Activated naive CD4-positive, alpha-beta T cell treated with anti-CD3 and anti-CD28 coated beads for 36 hours (primary cell): ENCODE measurements at regions of chr5 and their contacts with region 1.

Region 1: GRCh38 chr5:1594357-1595106 is 70.8 kb upstream of the LPCAT1 start:
- DNase-seq: peak; percentile 80
- H3K4me3 Mint-ChIP-seq: peak overlapping the region; percentile 74
- H3K27ac Mint-ChIP-seq: no peak overlapping the region
- H3K4me1 Mint-ChIP-seq: peaks cover 19% of the 10 kb centered on the region
- H3K27me3 Mint-ChIP-seq: no peaks in the 10 kb centered on the region

Region 2: GRCh38 chr5:1385395-1386273 is 208.9 kb before region 1 on chr5:
- CTCF ChIA-PET with region 1: no interaction called
- intact Hi-C with region 1: loop called (anchors 1 kb)
- DNase-seq: peak; percentile 85
- H3K4me3 Mint-ChIP-seq: peak overlapping the region; percentile 90
- H3K27ac Mint-ChIP-seq: peak overlapping the region; percentile 89
- H3K4me1 Mint-ChIP-seq: peaks cover 15% of the 10 kb centered on the region
- H3K27me3 Mint-ChIP-seq: no peaks in the 10 kb centered on the region

Region 3: DNA sequence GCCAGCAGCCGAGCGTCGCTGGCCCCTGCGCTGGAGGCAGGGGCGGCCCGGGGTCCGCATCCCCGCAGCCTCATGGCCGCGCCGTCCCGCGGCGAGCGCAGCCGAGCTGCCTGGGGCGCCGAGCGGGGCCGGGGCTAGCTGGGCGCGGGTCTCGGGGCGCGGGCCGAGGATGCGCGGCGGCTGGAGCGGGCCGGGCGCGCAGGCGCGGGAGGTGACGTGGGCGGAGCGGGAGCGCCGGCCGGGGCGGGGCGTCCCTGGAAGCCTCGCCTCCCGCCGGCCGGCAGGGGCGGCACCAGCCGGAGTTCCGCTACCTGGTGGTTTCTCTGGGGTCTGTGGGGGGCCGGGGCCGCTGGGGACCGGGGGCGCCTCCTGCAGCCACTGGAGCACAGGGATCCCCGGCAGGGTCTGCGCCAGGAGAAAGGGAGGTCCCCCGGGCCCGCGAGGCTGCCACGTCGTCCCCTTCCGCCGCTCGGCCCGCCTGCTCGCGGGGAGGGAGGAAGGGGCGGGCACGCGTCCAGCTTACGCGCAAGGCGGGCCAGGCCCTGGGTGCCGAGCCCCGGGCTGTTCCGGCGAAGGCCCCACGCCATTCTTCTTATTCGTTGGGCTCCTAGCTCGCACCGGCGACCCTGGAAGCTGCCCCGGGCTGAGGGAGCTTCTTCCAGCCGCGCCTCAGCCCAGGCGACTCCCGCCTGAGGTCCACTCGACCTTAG is 70.6 kb before region 1 on chr5 and contains the start of gene LPCAT1:
- CTCF ChIA-PET with region 1: interaction called, 3 read pairs
- intact Hi-C with region 1: loop called (anchors 1 kb)
- DNase-seq: peak; percentile 68
- H3K4me3 Mint-ChIP-seq: peak within 1 kb of the TSS; percentile 87
- H3K27ac Mint-ChIP-seq: peak within 1 kb of the TSS; percentile 4
- H3K4me1 Mint-ChIP-seq: peaks cover 22% of the 10 kb centered on the region
- H3K27me3 Mint-ChIP-seq: no peaks in the 10 kb centered on the region
- total RNA-seq, gene LPCAT1: 31.2 to 34.1 TPM

Region 4: GRCh38 chr5:1536322-1536845 is 58.1 kb before region 1 on chr5:
- CTCF ChIA-PET with region 1: no interaction called
- intact Hi-C with region 1: loop called (anchors 2 kb)
- DNase-seq: peak; percentile 89
- H3K4me3 Mint-ChIP-seq: peak overlapping the region; percentile 76
- H3K27ac Mint-ChIP-seq: peak overlapping the region; percentile 68
- H3K4me1 Mint-ChIP-seq: peaks cover 16% of the 10 kb centered on the region
- H3K27me3 Mint-ChIP-seq: no peaks in the 10 kb centered on the region

Region 5: GRCh38 chr5:1792842-1793266 is 198.3 kb after region 1 on chr5:
- CTCF ChIA-PET with region 1: no interaction called
- intact Hi-C with region 1: loop called (anchors 1 kb)
- DNase-seq: peak; percentile 89
- H3K4me3 Mint-ChIP-seq: peak overlapping the region; percentile 59
- H3K27ac Mint-ChIP-seq: peak overlapping the region; percentile 96
- H3K4me1 Mint-ChIP-seq: peaks cover 74% of the 10 kb centered on the region
- H3K27me3 Mint-ChIP-seq: no peaks in the 10 kb centered on the region